ENCODE measurements at regions of chr3 and their contacts with region 1.

Region 1: GRCh38 chr3:113745273-113746068 is 578 bp downstream of the NAA50 start:
- DNase-seq: peak; percentile 88
- ATAC-seq: peak; percentile 74
- H3K4me3 Mint-ChIP-seq: peak overlapping the region; percentile 96
- H3K27ac Mint-ChIP-seq: peak overlapping the region; percentile 100
- H3K4me1 Mint-ChIP-seq: peaks cover 58% of the 10 kb centered on the region
- H3K27me3 Mint-ChIP-seq: no peaks in the 10 kb centered on the region

Region 2: GRCh38 chr3:113495035-113495434 is 250.4 kb before region 1 on chr3:
- CTCF ChIA-PET with region 1: interaction called, 33 read pairs
- POLR2A ChIA-PET with region 1: interaction called, 4 read pairs
- DNase-seq: peak; percentile 58
- ATAC-seq: peak; percentile 67
- H3K4me3 Mint-ChIP-seq: no peak overlapping the region
- H3K27ac Mint-ChIP-seq: no peak overlapping the region
- H3K4me1 Mint-ChIP-seq: peaks cover 5% of the 10 kb centered on the region
- H3K27me3 Mint-ChIP-seq: no peaks in the 10 kb centered on the region

Region 3: DNA sequence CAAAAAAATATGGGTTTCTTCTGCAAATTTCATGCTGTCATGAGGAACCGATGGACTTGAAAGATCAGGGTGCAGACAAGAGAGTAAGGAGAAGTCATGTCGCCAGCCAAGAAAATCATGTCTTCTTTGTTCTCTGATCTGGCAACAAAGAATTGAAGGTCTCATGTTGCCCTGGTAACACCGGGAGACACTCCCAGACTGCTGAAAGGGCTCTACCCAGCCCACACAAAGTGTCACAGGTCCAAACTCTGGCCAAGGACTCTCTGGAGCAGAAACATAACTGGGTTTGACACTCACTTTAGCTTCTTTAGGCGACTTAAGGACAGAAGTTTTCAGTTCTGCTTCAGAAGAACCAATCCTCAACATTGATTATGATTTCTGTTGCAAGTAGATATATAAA is 170.3 kb before region 1 on chr3:
- CTCF ChIA-PET with region 1: interaction called, 24 read pairs
- POLR2A ChIA-PET with region 1: interaction called, 4 read pairs
- DNase-seq: no peak
- ATAC-seq: no peak
- H3K4me3 Mint-ChIP-seq: no peak overlapping the region
- H3K27ac Mint-ChIP-seq: no peak overlapping the region
- H3K4me1 Mint-ChIP-seq: peaks cover 8% of the 10 kb centered on the region
- H3K27me3 Mint-ChIP-seq: no peaks in the 10 kb centered on the region

Region 4: DNA sequence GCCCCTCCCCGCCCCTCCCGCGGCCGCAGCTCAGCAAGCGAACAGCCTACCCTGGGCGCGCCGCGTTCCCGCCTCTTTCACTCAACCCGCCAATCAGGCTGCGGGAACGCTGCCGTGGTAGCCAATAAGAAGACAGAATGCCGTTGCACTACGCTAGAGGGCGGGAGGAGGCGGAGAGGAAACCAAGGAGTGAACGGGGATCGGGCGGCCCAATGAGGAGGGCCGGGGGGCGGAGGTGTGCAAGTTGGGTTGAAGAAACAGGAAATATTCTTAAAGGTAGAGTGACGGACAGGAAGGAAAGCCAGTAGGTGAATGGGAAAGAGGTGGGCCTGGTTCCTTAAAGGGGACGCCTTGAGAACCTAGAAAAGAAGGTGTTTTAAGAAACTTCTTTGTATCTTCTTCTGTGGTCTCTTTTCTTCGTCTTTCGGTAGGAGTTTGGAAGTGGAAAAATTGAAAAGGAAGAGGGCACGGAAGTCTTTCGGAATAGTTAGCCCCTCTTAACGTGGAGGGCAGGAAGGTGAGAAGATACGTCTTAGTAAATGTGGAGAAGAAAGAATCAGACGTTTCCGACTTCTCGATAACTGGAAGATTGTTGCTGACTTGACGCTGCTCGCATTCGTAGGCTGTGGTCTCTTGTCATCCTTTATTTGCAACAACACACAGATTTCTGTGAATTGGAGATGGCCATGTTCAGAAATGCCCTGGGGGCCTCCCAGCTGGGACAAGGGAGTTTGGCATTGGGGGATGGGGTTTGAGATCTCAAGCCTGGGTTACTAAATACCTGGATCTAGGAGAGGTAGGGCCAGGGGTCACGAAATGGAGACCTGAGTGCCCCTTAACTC is 48.6 kb before region 1 on chr3:
- CTCF ChIA-PET with region 1: interaction called, 19 read pairs
- POLR2A ChIA-PET with region 1: interaction called, 6 read pairs
- DNase-seq: peak; percentile 100
- ATAC-seq: peak; percentile 90
- H3K4me3 Mint-ChIP-seq: no peak overlapping the region
- H3K27ac Mint-ChIP-seq: no peak overlapping the region
- H3K4me1 Mint-ChIP-seq: peaks cover 32% of the 10 kb centered on the region
- H3K27me3 Mint-ChIP-seq: no peaks in the 10 kb centered on the region

Region 5: DNA sequence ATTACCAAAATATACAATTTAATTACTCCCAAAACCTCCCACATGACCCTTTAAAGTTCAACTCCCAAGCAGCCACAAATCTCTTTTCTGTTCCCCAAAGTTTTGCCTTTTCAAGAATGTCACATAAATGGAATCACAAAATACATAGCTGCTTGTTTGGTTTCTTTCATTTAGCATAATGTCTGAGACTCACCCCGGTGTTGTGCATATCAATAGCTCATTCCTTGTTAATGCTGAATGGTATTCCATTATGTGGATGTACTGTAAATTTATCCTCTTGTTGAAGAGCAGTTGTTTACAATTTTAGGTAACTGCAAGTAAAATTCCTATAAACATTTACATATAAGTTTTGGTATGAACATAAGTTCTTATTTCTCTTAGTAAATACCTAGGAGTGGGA is 14.9 kb before region 1 on chr3:
- CTCF ChIA-PET with region 1: interaction called, 86 read pairs
- POLR2A ChIA-PET with region 1: interaction called, 4 read pairs
- DNase-seq: no peak
- ATAC-seq: no peak
- H3K4me3 Mint-ChIP-seq: no peak overlapping the region
- H3K27ac Mint-ChIP-seq: no peak overlapping the region
- H3K4me1 Mint-ChIP-seq: peaks cover 3% of the 10 kb centered on the region
- H3K27me3 Mint-ChIP-seq: no peaks in the 10 kb centered on the region